Right ventricle myocardium superior (tissue), 1 donor: ENCODE measurements at regions of chr9 and their contacts with region 1.

Region 1: DNA sequence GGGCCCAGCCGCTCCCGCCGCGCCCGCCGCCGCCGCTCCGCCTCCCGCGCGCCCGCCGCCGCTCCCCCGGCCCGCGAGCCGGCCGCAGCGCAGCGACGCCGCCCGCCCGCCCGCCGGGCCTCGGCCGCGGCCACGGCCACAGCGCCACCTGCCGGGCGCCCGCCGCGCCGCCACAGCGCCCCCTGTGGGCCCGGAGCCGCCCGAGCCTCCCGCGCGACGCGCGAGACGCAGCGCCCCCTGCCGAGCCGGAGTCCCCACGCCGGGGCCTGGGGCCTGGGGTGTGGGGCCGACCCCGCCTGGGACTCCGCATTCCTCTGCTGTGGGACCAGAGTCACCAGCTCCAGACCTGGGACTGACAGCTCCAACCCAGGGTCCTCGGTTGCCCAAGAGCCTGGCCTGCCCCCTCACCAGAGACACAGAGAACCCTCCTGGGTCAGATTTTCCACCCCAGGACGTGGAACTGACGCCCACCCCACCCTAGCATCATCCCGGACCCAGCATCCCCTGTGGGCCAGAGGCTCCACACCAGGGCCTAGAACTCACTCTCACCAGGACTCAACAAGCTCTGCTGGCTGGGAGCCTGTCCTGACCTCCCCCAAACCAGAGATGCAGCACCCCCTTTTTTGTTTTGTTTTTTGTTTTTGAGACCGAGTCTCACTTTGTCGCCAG is at the start of gene RAPGEF1:
- DNase-seq: peak; percentile 85
- ATAC-seq: peak; percentile 80
- total RNA-seq, gene RAPGEF1: 119 TPM

Region 2: GRCh38 chr9:131366761-131367401 is 373.2 kb before region 1 on chr9:
- intact Hi-C with region 1: loop called (anchors 10 kb)
- DNase-seq: peak; percentile 51
- ATAC-seq: peak; percentile 78

Region 3: DNA sequence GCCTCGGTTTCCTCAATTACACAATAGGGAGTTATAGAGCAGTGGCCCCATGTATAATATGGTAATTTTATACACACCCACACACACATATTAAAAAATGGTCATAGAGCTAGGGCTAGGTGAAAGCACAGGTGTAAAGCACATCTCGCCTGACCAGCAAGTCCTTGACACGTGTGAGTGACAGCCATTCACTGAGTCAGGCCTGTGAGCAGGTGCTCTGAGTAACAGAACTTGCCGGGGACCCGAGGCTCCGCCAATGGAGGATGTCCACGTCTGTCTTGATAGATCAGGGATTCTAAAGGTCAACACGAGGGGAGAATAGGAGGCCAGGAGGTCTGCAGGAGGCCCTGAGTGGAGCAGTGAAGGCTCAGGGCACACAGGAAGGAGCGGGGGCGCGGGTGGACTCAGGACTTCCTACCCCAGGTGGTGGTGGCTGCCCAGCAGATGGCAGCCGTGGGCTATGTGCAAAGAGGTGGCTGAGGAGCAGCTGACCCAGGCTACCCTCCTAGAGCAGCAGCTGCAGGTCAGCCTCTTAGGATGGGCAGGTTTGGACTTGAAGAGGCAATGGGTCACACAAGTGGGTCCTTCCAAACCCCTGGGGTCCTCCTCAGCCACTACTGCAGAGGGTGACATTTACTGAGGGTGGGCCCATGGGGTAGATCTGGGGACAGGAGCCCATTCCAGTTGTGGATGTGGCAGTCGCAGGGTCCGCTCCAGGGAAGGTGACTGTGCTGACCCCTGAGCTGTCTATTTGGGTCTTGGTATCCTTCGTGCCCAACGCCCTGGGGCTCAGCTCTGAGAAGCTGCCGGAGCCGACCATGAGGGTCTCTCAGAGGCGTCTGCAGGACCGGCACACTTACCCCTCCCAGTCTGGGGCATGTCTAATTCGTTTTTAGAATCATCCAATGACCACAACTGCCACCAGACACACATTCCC is 148.9 kb before region 1 on chr9:
- intact Hi-C with region 1: loop called (anchors 2 kb)
- DNase-seq: peak; percentile 89
- ATAC-seq: peak; percentile 95

Region 4: GRCh38 chr9:131608493-131609037 is 131.5 kb before region 1 on chr9:
- intact Hi-C with region 1: loop called (anchors 5 kb)
- DNase-seq: peak; percentile 71
- ATAC-seq: peak; percentile 79

Region 5: DNA sequence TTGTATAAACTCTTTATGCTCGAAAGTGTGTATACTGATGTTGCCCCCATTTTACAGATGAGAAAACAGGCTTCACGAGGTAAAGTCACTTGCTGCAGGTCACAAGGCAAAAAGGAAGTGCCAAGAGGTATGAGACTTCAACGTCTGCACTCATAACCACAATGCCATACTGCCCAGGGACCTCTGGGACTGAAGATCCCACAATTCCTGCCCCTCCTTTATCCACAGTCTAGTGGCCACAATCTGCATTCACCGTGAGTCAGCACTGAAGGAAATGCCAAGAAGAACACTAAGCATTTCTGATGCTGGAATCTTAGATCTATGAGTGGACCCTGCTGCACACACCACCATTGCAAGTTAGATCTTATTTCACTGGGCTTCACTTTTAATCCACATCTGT is 302.2 kb after region 1 on chr9:
- intact Hi-C with region 1: no loop called
- DNase-seq: no peak
- ATAC-seq: no peak